Right cardiac atrium (tissue), 5 donors: ENCODE measurements at regions of chr4 and their contacts with region 1.

Region 1: DNA sequence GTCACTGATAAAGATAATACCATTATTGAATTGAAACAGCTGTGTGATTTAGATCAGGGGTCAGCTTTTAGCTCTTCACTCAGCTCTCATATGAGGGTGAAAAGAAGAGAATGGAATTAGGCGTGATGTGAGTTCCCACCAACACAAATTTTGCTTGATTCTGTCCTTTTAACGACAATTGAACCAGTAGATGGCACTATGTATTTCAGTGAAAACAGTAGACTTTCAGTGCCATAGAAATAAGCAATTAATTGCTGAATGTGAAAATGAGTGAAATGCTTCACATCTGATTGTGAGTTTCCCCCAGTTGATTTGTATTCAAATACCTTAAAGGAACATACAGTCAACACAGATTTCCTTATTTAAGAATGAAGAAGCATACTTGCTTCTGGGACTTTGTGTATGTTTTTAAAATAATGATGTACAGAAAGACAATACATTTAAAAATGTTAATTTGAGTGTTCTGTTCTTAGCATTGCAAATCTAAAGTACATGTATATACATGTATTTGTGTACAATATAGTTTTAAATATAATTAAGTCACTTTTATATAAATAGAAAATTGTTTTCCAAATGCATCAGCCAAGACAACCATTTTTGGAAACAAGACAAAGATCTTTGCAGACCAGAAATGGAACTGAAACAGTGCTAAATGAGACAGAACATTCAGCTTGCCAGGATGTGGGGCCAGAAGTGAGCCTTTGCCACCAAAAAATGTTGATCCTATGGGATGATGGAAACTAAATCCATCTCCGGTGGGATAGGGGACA is 178.8 kb downstream of the SNCA start:
- DNase-seq: no peak
- ATAC-seq: no peak
- H3K4me3 ChIP-seq: no peak overlapping the region
- H3K27ac ChIP-seq: no peak overlapping the region
- H3K4me1 ChIP-seq: no peaks in the 10 kb centered on the region
- H3K27me3 ChIP-seq: no peaks in the 10 kb centered on the region

Region 2: GRCh38 chr4:89868999-89869589 is 211.0 kb after region 1 on chr4:
- intact Hi-C with region 1: loop called in 2 of 4 experiments (anchors 5 to 10 kb)
- DNase-seq: no peak
- ATAC-seq: no peak
- H3K4me3 ChIP-seq: no peak overlapping the region
- H3K27ac ChIP-seq: no peak overlapping the region
- H3K4me1 ChIP-seq: no peaks in the 10 kb centered on the region
- H3K27me3 ChIP-seq: no peaks in the 10 kb centered on the region

Region 3: GRCh38 chr4:89878611-89879010 is 220.5 kb after region 1 on chr4:
- intact Hi-C with region 1: loop called in 1 of 4 experiments (anchors 10 kb)
- DNase-seq: no peak
- ATAC-seq: no peak
- H3K4me3 ChIP-seq: no peak overlapping the region
- H3K27ac ChIP-seq: no peak overlapping the region
- H3K4me1 ChIP-seq: no peaks in the 10 kb centered on the region
- H3K27me3 ChIP-seq: no peaks in the 10 kb centered on the region